CD4-positive, alpha-beta memory T cell (primary cell): ENCODE measurements at regions of chr16 and their contacts with region 1.

Region 1: GRCh38 chr16:10362077-10362863 is 23.6 kb upstream of the ATF7IP2 start:
- DNase-seq: peak in 4 of 5 donors; percentile 4 to 33 (median 18)
- H3K4me3 ChIP-seq: no peak overlapping the region
- H3K4me3 Mint-ChIP-seq: peak overlapping the region; percentile 57 to 85 (median 67)
- H3K27ac ChIP-seq: no peak overlapping the region
- H3K27ac Mint-ChIP-seq: peak overlapping the region; percentile 2 to 93 (median 80)
- H3K4me1 ChIP-seq: peaks cover 19% of the 10 kb centered on the region
- H3K4me1 Mint-ChIP-seq: peaks cover 9 to 20% (median 13%) of the 10 kb centered on the region in 4 donors
- H3K27me3 ChIP-seq: no peaks in the 10 kb centered on the region
- H3K27me3 Mint-ChIP-seq: no peaks in the 10 kb centered on the region

Region 2: GRCh38 chr16:10325783-10326543 is 36.3 kb before region 1 on chr16:
- CTCF ChIA-PET with region 1: no interaction called
- POLR2A ChIA-PET with region 1: interaction called, 5 read pairs
- intact Hi-C with region 1: loop called (anchors 5 kb)
- DNase-seq: no peak
- H3K4me3 ChIP-seq: no peak overlapping the region
- H3K4me3 Mint-ChIP-seq: peak overlapping the region in 1 of 8 donors; percentile 20
- H3K27ac ChIP-seq: no peak overlapping the region
- H3K27ac Mint-ChIP-seq: no peak overlapping the region
- H3K4me1 ChIP-seq: peaks cover 16% of the 10 kb centered on the region
- H3K4me1 Mint-ChIP-seq: peaks cover 12 to 25% (median 19%) of the 10 kb centered on the region in 4 donors
- H3K27me3 ChIP-seq: no peaks in the 10 kb centered on the region
- H3K27me3 Mint-ChIP-seq: no peaks in the 10 kb centered on the region

Region 3: GRCh38 chr16:10405386-10405939 is 43.2 kb after region 1 on chr16:
- CTCF ChIA-PET with region 1: no interaction called
- POLR2A ChIA-PET with region 1: no interaction called
- intact Hi-C with region 1: no loop called
- DNase-seq: no peak
- H3K4me3 ChIP-seq: no peak overlapping the region
- H3K4me3 Mint-ChIP-seq: no peak overlapping the region
- H3K27ac ChIP-seq: no peak overlapping the region
- H3K27ac Mint-ChIP-seq: no peak overlapping the region
- H3K4me1 ChIP-seq: peaks cover 12% of the 10 kb centered on the region
- H3K4me1 Mint-ChIP-seq: peaks cover 9 to 29% (median 21%) of the 10 kb centered on the region in 4 donors
- H3K27me3 ChIP-seq: no peaks in the 10 kb centered on the region
- H3K27me3 Mint-ChIP-seq: no peaks in the 10 kb centered on the region